Aorta (tissue), 5 donors: ENCODE measurements at regions of chr12 and their contacts with region 1.

Region 1: DNA sequence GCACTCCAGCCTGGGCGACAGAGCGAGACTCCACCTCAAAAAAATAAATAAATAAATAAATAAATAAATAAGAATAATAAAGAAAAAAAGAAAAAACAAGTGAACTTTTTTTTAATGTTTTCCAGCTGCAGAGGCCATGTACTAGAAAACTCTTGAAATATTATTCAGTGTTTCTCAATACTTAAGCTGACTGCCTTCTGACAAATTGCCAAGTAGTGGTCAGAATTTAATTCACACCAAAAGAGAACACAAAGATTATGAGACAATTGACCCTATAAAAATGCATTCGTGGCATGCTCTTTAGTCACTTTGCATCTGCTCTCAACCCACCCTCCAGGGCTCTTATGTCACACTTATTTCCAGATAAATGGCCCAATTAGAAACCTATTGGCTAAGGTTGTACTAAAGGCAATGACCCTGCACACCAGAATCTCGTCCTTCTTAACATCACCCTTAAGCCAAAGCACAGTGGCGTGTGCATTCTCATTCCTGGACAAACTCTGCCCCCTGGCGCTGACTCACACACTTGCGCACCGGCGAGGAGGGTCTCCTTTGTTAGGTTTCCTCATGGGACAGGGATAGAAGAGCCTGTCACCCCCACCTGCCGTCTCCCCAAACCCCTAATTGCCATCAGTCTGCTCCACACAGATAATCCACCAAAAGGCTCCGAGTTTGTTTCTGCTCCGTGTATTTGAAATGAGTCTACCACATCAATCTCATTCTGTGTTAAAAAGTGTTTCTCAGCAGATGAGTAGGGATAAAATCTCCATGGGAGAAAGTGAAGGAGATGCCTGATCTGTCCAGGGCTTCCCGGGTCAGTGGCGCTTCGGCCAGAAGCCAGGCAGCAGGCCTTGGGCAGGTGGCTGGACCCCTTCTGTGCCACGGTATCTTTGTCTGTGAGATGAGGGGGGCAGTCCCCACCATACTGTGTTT is 73.1 kb upstream of the CEP83 start:
- DNase-seq: peak; percentile 79 to 87
- ATAC-seq: peak; percentile 84
- H3K4me3 ChIP-seq: no peak overlapping the region
- H3K27ac ChIP-seq: no peak overlapping the region
- H3K4me1 ChIP-seq: no peaks in the 10 kb centered on the region
- H3K27me3 ChIP-seq: no peaks in the 10 kb centered on the region

Region 2: DNA sequence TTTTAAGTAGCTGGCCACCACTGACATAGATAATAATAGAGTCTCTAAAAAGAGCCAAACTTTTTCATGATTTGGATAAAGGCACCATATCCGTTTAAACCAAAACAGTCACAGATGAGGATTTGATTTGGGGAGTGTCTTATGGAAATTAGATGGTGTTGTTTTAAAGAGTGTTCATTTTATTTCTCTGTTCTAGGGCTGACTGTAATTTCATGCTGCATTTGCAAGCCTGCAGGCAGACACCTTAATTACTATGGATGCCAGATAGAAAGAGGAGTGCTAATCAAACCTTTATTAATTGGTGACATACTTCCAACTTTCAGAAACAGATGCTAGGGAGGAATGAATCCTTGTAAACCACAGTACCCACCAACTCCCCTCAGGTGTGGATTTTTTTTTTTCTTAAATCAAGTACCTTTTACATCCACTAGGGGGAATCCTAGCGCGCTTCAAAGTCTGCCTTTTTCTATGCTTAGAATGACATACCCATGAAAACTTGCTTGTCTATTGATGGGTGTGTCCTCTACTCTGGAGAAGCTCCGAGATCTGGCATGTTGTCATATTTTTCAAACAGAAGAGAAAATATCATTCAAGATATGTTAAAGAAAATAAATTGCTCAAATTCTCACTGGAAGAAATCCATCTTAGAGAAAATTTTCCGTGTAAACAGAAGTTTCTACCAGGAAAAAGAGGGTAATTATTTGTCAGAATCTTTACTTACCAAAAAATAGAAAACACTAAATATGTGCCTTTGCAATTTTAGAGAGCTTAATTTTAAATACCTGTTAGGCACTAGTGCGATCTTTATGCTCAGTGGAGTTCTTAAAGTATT is 398.6 kb before region 1 on chr12:
- intact Hi-C with region 1: loop called (anchors 2 kb)
- DNase-seq: no peak
- ATAC-seq: peak; percentile 67
- H3K4me3 ChIP-seq: no peak overlapping the region
- H3K27ac ChIP-seq: no peak overlapping the region
- H3K4me1 ChIP-seq: no peaks in the 10 kb centered on the region
- H3K27me3 ChIP-seq: no peaks in the 10 kb centered on the region

Region 3: GRCh38 chr12:94516985-94517384 is 15.8 kb before region 1 on chr12:
- intact Hi-C with region 1: no loop called
- DNase-seq: no peak
- ATAC-seq: no peak
- H3K4me3 ChIP-seq: no peak overlapping the region
- H3K27ac ChIP-seq: no peak overlapping the region
- H3K4me1 ChIP-seq: no peaks in the 10 kb centered on the region
- H3K27me3 ChIP-seq: no peaks in the 10 kb centered on the region

Region 4: DNA sequence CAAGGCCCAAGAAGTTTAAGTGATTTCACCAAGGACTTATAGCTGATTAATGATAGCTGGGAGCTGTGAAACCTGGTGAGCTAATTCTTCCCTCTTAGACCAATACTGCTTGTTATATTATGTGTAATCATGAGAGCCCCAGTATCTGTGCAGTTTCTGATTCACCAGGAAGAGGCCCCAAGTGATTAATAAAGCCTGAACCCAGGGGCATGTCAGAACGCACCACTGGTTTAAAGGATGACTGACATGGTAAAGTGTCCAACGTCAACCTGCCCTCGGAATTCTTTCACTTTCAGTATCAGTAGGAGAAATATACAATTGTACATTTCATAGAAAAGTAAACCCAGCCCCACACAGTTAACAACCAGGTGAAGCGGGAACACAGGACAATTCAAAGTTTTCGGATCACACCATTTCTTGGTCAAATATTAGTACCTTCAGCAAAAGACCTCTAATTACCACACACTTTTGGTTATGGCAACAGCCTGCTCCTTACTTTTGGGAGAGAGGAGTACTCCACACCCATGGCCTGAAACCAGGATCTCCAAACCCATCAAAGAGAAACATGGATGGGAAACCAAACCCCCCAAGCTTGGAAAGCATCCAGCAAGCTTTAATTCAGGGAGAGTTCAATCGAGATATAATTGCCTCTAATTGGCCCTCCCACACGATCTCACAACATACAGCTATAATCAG is 89.1 kb after region 1 on chr12:
- intact Hi-C with region 1: no loop called
- DNase-seq: no peak
- ATAC-seq: peak; percentile 11
- H3K4me3 ChIP-seq: peak overlapping the region in 1 of 2 donors; percentile 4
- H3K27ac ChIP-seq: no peak overlapping the region
- H3K4me1 ChIP-seq: peaks cover 0 to 5% of the 10 kb centered on the region in 2 donors
- H3K27me3 ChIP-seq: no peaks in the 10 kb centered on the region